ENCODE measurements at regions of chr12 and their contacts with region 1.

Region 1: DNA sequence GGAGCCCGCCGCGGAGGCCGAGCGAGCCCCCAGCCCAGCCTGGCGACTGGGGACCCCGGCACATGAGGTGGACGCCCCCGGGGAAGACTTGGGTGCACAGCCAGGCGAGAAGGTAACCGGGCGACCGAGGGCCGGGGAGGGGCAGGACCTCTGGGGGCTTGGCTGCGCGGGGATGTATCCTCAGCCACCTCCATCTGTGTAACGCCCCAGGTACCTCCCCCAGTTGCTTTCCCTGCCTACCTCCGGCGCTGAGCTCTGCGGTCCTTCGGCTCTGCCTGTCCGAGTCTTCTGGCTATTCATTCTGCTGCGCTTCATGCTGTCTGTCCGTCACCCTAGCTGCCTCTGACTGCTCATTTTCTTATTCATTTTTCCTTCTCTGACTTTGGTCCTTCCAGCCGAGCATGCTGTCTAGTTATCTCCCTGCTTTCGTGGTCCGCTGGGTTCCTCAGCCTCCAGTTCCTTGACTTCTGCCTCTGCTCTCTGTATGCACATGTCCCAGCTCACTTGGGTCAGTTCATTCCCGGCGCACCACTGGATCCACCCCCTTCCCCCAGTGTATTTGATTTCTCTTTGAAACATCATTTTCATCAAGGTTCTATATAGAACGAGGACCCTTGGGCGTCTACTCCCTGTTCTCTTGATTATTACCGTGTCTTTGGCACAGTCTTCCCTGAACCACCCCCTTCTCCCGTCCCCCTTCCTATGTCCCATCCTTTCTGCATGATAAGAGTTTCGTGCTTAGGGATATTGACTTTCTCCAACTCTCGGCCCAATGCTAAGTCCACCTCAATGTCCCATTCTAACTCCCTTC is 612 bp downstream of the PHC1 start:
- DNase-seq: peak in 6 of 10 donors; percentile 35 to 60 (median 48)
- H3K4me3 ChIP-seq: peak overlapping the region; percentile 60 to 92 (median 79)
- H3K27ac ChIP-seq: peak overlapping the region in 47 of 59 donors; percentile 16 to 92 (median 73)
- H3K27me3 ChIP-seq: no peaks in the 10 kb centered on the region
- CTCF ChIP-seq: no peak

Region 2: DNA sequence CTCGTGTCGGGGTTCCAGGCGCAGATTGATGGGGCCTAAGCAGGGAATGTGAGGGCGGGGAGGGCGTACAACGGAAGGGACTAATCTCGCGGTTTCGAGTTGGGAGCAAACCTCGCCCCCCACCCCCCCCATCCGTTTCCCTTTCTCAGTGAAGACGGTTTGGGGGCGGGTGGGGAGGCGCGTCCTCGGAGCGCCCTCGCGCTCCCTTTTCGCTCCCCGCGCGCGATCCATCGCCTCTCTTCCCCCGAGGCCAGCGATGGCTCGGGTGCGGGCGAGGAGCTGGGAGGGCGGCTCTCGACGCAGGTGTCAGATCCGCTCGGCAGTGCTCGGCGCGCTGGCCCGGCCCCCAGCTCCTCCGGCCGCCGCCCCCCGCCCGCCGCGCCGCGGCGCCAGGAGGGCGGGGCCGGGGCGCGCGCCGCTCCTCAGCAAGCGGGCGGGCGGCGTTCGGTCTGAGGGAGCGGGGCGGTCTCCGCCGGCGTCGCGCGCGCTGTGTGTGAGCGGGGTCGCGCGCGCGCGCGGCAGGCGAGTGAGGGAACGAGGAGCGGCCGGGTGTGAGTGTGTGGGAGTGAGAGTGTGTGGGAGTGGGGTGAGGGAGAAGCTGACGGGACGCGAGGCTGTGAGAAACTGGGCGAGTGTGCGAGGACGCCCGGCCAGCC is 217.3 kb before region 1 on chr12 and contains the start of gene RIMKLB:
- intact Hi-C with region 1: loop called in 1 of 2 experiments (anchors 5 kb)
- DNase-seq: peak; percentile 35 to 88 (median 78)
- H3K4me3 ChIP-seq: peak within 1 kb of the TSS; percentile 61 to 98 (median 87)
- H3K27ac ChIP-seq: peak within 1 kb of the TSS; percentile 41 to 97 (median 87)
- H3K27me3 ChIP-seq: no peaks in the 10 kb centered on the region
- CTCF ChIP-seq: no peak
- total RNA-seq, gene RIMKLB: 26.8 to 88.1 (median 51.3) TPM

Region 3: GRCh38 chr12:8949342-8950220 is 34.7 kb after region 1 on chr12 and contains the start of gene M6PR:
- intact Hi-C with region 1: loop called in 1 of 2 experiments (anchors 2 kb)
- DNase-seq: peak; percentile 93 to 97 (median 96)
- H3K4me3 ChIP-seq: peak within 1 kb of the TSS; percentile 55 to 99 (median 92)
- H3K27ac ChIP-seq: peak within 1 kb of the TSS; percentile 92 to 100 (median 99)
- H3K27me3 ChIP-seq: no peaks in the 10 kb centered on the region
- CTCF ChIP-seq: peak in 54 of 56 donors; percentile 16 to 72 (median 50)
- total RNA-seq, gene M6PR: 63.7 to 141 (median 99.9) TPM

Region 4: GRCh38 chr12:9103050-9103849 is 188.3 kb after region 1 on chr12:
- intact Hi-C with region 1: no loop called
- DNase-seq: no peak
- H3K4me3 ChIP-seq: no peak overlapping the region
- H3K27ac ChIP-seq: no peak overlapping the region
- H3K27me3 ChIP-seq: no peaks in the 10 kb centered on the region
- CTCF ChIP-seq: peak in 1 of 56 donors; percentile 11